ENCODE measurements at regions of chr11 and their contacts with region 1.

Region 1: DNA sequence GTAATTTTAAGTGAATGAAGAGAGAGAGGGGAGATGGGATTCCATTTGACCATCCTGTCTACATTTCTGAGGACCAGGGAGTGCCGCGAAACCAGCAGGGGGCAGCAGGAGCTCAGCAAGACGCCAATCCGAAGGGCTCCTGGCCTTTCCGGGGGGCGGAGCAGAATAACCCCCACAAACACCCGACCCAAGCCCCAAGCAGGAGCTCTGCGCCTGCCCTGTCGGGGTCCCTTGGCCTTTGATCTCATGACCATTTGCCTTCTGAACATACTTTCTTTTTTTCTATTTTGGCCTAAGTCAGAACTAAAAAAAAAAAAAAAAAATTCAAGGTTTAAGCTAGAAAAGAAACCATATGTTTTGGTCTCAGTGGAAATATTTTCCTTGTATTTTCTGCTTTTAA is 21.9 kb upstream of the SCN2B start:
- DNase-seq: peak; percentile 89
- ATAC-seq: peak; percentile 47

Region 2: DNA sequence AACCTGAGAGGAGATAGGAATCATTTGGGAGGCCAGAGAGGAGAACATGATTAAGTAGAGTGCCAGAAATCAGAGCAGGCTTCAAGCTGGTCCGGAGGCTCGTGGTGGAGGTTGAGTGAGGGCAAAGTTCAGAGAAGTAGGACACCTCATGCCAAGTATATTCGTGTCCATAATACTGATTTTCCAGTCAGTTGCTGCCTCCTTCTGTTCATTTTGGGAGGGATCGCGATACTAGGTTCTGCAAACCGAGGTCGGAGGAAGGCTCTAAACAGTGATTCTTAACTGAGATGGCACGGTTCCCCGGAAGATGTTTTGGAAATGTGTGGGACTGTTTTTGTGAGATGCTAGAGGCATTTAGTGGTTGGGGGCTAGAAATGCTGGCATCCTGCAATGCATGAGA is 92.6 kb after region 1 on chr11:
- intact Hi-C with region 1: loop called (anchors 2 kb)
- DNase-seq: no peak
- ATAC-seq: peak; percentile 85

Region 3: DNA sequence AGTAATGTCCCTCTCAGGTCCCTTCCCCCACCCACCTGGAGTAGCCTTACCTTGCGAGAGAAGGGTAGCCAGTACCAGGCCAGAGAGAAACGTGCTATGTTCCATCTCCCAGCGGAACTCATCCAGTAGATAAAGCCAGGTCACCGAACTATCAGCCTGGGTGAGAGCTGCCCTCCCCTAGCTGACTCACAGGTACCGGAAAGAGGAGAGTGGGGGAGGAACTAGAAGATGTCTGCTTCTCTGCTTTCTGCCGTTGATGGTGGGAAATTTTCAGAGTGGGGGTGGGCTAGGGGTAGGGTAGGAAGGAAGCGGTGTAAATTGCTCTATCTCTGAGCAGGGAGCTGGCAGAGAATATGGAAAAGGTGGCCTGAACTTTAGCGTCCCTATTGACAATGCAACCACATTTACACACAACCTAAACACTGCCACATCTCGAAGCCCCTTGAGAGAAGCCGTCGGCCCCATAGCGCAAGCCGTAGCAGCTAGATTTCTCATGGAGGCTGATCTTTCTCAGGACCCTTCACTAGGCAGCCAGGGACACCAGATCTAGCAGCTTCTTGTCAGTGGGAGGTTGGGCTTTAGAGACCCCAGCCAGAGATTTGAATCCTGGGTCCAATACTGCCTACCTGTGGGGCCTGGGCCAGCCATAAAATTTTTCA is 144.3 kb after region 1 on chr11 and contains the start of gene CD3D:
- intact Hi-C with region 1: loop called (anchors 10 kb)
- DNase-seq: no peak
- ATAC-seq: no peak
- total RNA-seq, gene CD3D: 1.6 TPM

Measured in left ventricle myocardium superior (tissue), 1 donor.